Activated CD4-positive, alpha-beta T cell treated with anti-CD3 and anti-CD28 coated beads for 36 hours (primary cell): ENCODE measurements at regions of chr3 and their contacts with region 1.

Region 1: GRCh38 chr3:27467545-27467944 is 16.6 kb downstream of the SLC4A7 start:
- DNase-seq: no peak
- ATAC-seq: peak; percentile 84
- H3K4me3 Mint-ChIP-seq: no peak overlapping the region
- H3K27ac Mint-ChIP-seq: no peak overlapping the region
- H3K4me1 Mint-ChIP-seq: peaks cover 18% of the 10 kb centered on the region
- H3K27me3 Mint-ChIP-seq: no peaks in the 10 kb centered on the region

Region 2: DNA sequence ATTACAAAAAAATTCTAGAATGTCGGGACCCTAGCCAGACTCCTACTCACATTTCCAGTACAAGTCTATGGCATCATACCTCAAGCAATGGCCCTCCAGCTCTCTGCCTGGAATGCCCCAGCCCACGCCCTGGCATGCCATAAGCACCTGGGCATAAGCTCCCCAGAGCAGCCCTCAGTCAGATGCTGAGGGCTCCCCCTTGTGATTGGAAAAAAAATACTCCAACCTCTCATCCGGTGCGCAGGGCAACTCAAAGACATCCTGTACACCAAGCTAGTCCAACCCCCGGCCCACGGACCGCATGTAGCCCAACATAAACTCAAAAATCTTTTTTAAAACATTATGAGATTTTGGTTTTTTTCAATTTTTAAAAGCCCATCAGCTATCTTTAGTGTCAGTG is 213.7 kb before region 1 on chr3:
- CTCF ChIA-PET with region 1: no interaction called
- POLR2A ChIA-PET with region 1: no interaction called
- intact Hi-C with region 1: no loop called
- DNase-seq: peak; percentile 46
- ATAC-seq: peak; percentile 68
- H3K4me3 Mint-ChIP-seq: no peak overlapping the region
- H3K27ac Mint-ChIP-seq: no peak overlapping the region
- H3K4me1 Mint-ChIP-seq: no peaks in the 10 kb centered on the region
- H3K27me3 Mint-ChIP-seq: peaks cover 13% of the 10 kb centered on the region

Region 3: DNA sequence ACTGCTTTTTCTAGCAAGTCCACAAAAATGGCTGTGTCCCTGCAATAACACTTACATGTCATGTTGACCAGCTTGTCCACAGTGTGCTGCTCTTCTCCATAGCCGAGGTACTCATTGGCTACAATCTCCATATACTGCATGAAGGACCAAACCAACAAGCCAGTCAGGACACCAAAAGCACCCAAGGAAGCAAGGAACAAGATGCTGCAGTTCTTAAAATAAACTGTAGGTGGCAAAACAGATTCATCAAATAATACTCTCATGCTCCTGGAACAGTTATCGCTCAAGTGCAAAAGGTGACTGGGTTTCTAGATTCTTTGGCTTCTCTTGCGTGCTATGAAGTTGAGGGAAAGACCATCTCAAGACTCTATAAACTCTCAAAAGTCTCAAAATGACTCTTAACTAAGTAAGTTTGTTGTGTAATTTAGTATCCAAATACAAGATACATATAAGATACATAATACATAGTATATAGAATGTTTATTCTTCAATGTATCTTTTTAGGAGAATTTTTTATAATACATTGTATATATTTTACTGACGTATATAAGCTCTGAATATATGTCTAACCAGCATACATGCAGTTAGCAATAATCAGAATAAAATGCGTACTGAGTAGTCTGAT is 155.4 kb before region 1 on chr3:
- CTCF ChIA-PET with region 1: interaction called, 7 read pairs
- POLR2A ChIA-PET with region 1: no interaction called
- intact Hi-C with region 1: loop called (anchors 1 to 2 kb)
- DNase-seq: no peak
- ATAC-seq: peak; percentile 63
- H3K4me3 Mint-ChIP-seq: no peak overlapping the region
- H3K27ac Mint-ChIP-seq: no peak overlapping the region
- H3K4me1 Mint-ChIP-seq: no peaks in the 10 kb centered on the region
- H3K27me3 Mint-ChIP-seq: peaks cover 2% of the 10 kb centered on the region

Region 4: DNA sequence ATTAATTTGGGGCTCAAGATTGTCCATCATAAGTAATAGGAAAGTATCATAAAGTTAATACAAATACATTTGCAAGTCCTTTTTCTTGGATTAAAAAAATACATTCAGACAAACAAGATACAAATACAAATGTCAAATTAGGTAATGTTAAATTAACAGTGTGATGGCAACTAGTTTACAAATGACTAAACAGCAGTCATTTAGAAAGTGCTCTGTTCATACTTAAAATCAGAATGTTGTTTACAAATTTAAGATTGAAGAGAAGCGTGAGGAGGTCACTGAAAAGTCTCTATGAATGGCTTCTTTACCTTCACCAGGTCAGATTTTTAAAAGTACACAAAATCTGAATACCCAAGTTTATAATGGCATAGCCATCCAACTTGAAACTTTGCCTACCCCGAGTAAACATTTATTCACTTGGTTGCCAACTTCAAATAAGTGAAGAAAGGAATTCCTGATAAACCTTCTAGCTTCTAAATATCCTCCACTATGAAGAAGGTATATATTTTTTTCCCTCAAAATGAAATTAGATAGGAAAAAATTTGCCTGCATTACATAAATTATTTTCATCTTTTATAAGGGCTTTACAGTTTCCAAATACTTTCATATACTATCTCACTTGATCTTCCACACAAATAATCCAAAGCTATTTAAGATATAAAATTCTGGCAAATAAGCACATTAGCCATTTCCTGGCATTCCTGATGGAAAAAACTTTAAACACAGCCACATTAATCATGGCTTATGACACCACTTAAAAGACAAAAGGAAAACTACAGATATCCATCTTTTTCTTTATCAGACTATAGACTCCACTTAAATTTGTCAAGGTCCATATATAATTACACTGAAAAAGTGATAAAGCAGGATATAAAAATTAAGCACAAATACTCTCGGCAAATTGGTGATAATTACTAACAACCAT is 86.8 kb before region 1 on chr3:
- CTCF ChIA-PET with region 1: interaction called, 4 read pairs
- POLR2A ChIA-PET with region 1: no interaction called
- intact Hi-C with region 1: loop called in 1 of 2 experiments (anchors 5 kb)
- DNase-seq: no peak
- ATAC-seq: no peak
- H3K4me3 Mint-ChIP-seq: no peak overlapping the region
- H3K27ac Mint-ChIP-seq: no peak overlapping the region
- H3K4me1 Mint-ChIP-seq: peaks cover 6% of the 10 kb centered on the region
- H3K27me3 Mint-ChIP-seq: no peaks in the 10 kb centered on the region

Region 5: GRCh38 chr3:27428446-27428845 is 39.1 kb before region 1 on chr3:
- CTCF ChIA-PET with region 1: interaction called, 3 read pairs
- POLR2A ChIA-PET with region 1: interaction called, 3 read pairs
- intact Hi-C with region 1: loop called in 1 of 2 experiments (anchors 5 kb)
- DNase-seq: no peak
- ATAC-seq: no peak
- H3K4me3 Mint-ChIP-seq: no peak overlapping the region
- H3K27ac Mint-ChIP-seq: no peak overlapping the region
- H3K4me1 Mint-ChIP-seq: peaks cover 13% of the 10 kb centered on the region
- H3K27me3 Mint-ChIP-seq: no peaks in the 10 kb centered on the region

Region 6: DNA sequence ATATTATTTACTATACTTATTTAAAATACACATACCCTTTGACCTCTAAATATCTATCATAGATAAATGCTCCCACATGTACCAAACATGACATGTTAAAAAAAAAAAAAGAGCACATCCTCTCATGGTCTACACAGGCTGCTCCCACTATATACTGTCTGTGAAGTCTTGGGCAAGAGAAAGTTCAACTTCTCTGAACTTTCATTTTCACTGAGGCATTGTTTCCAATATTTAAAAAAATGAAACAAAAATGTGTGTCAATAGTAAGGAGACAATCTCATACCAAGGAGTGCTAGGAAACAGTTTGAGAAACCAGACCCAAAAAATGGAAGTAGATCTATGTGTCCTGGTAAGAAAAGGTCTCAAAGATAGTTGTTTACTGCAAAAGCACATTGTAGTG is 12.6 kb before region 1 on chr3:
- CTCF ChIA-PET with region 1: interaction called, 15 read pairs
- POLR2A ChIA-PET with region 1: no interaction called
- intact Hi-C with region 1: no loop called
- DNase-seq: no peak
- ATAC-seq: peak; percentile 89
- H3K4me3 Mint-ChIP-seq: no peak overlapping the region
- H3K27ac Mint-ChIP-seq: peak overlapping the region; percentile 65
- H3K4me1 Mint-ChIP-seq: peaks cover 65% of the 10 kb centered on the region
- H3K27me3 Mint-ChIP-seq: no peaks in the 10 kb centered on the region